Natural killer cell (primary cell): ENCODE measurements at regions of chr12 and their contacts with region 1.

Region 1: DNA sequence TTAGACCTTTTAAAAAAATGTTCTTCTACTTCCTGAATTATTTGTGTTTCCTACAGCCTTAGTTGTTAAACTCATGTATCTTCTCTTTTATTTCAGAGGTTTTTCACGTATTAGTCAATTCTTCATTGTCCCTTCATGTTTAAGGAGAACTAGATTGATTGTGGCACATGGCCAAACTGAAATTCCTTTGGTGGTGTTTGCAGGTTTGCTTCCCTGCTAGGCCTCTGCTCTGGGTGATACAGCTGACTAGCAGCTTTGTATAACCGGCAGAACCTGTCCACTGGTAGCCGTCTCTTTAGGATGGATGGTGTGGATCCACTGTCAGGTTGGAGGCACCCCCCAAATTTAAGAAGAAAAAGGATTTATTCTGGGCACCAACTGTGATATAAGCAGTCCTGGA is 262.1 kb downstream of the FBXL14 start:
- DNase-seq: no peak
- ATAC-seq: no peak
- H3K4me3 ChIP-seq: no peak overlapping the region
- H3K4me3 Mint-ChIP-seq: no peak overlapping the region
- H3K27ac ChIP-seq: no peak overlapping the region
- H3K27ac Mint-ChIP-seq: no peak overlapping the region
- H3K4me1 ChIP-seq: no peaks in the 10 kb centered on the region
- H3K4me1 Mint-ChIP-seq: peaks cover 6 to 9% of the 10 kb centered on the region in 2 donors
- H3K27me3 ChIP-seq: no peaks in the 10 kb centered on the region
- H3K27me3 Mint-ChIP-seq: no peaks in the 10 kb centered on the region
- CTCF ChIP-seq: no peak

Region 2: DNA sequence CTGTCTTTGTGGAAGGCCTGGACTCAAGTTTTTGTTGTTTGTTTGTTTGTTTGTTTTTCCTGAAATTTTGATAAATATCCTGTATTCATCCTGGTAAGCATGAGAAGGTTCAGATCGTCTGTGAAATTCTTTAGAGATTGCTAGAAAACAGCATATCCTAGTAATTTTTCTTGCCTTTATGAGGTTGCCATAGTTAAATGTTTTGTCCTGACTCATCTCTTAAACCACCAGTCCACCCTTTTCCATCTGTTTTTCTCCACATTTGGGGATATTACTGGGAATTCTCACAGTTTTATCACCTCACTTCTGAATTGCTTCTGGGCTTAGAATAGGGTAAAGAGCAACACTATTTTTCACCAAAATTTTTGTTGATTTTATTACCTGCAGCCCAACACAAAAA is 13.8 kb after region 1 on chr12:
- intact Hi-C with region 1: loop called (anchors 1 kb)
- DNase-seq: no peak
- ATAC-seq: no peak
- H3K4me3 ChIP-seq: no peak overlapping the region
- H3K4me3 Mint-ChIP-seq: no peak overlapping the region
- H3K27ac ChIP-seq: no peak overlapping the region
- H3K27ac Mint-ChIP-seq: no peak overlapping the region
- H3K4me1 ChIP-seq: no peaks in the 10 kb centered on the region
- H3K4me1 Mint-ChIP-seq: no peaks in the 10 kb centered on the region
- H3K27me3 ChIP-seq: no peaks in the 10 kb centered on the region
- H3K27me3 Mint-ChIP-seq: no peaks in the 10 kb centered on the region
- CTCF ChIP-seq: no peak